ENCODE measurements at regions of chr7 and their contacts with region 1.

Region 1: DNA sequence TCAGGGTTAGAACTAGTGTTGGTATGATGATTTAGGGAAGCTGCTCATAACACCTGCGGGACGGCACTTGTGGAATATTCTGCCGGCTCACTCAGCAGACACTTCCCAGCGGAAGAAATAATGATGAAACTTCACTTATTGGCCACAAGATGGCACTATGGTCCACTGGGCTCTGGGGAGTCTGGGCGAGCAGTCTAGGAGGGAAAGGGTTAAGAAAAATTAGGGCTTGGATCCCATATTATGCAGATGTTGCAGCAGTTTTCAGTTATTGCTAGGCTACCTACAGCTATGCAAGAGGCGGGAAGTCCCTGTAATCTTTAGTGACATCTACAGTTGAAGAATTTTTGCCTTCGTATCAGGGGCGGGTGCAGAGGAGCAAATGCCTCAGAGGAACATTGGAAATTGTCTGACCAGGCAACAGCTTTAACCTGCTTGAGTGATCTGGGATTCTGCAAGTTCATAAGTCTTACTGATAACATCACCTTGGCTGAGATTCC is 238.7 kb upstream of the PRSS58 start:
- DNase-seq: no peak
- H3K4me3 ChIP-seq: no peak overlapping the region
- H3K27me3 ChIP-seq: peaks cover 16% of the 10 kb centered on the region
- CTCF ChIP-seq: peak; percentile 77

Region 2: GRCh38 chr7:142001163-142001874 is 495.3 kb before region 1 on chr7:
- CTCF ChIA-PET with region 1: no interaction called
- POLR2A ChIA-PET with region 1: no interaction called
- DNase-seq: no peak
- H3K4me3 ChIP-seq: no peak overlapping the region
- H3K27me3 ChIP-seq: no peaks in the 10 kb centered on the region
- CTCF ChIP-seq: no peak

Region 3: DNA sequence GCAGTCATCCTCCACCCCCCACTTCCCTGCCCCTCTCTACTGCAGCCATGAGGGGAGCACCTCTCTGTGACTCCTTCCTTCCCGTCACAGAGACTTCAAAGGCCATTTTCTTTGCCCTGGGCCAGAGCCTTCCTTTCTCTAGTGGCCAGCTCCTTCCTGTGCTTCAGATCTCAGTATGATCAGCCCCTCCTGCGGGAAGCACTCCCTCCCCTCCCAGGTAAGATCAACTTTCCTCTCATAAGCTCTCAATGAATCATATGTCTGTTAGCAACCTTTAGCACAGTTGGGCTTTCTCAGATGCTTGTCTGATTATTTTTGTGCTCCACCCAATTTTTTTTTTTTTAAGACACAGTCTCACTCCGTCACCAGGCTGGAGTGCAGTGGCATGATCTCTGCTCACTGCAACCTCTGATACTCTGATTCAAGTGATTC is 11.7 kb after region 1 on chr7:
- CTCF ChIA-PET with region 1: interaction called, 236 read pairs
- POLR2A ChIA-PET with region 1: no interaction called
- DNase-seq: no peak
- H3K4me3 ChIP-seq: no peak overlapping the region
- H3K27me3 ChIP-seq: peaks cover 18% of the 10 kb centered on the region
- CTCF ChIP-seq: no peak

Region 4: GRCh38 chr7:142516038-142516501 is 19.5 kb after region 1 on chr7:
- CTCF ChIA-PET with region 1: interaction called, 31 read pairs
- POLR2A ChIA-PET with region 1: no interaction called
- DNase-seq: no peak
- H3K4me3 ChIP-seq: no peak overlapping the region
- H3K27me3 ChIP-seq: peaks cover 2% of the 10 kb centered on the region
- CTCF ChIP-seq: peak; percentile 83

Region 5: DNA sequence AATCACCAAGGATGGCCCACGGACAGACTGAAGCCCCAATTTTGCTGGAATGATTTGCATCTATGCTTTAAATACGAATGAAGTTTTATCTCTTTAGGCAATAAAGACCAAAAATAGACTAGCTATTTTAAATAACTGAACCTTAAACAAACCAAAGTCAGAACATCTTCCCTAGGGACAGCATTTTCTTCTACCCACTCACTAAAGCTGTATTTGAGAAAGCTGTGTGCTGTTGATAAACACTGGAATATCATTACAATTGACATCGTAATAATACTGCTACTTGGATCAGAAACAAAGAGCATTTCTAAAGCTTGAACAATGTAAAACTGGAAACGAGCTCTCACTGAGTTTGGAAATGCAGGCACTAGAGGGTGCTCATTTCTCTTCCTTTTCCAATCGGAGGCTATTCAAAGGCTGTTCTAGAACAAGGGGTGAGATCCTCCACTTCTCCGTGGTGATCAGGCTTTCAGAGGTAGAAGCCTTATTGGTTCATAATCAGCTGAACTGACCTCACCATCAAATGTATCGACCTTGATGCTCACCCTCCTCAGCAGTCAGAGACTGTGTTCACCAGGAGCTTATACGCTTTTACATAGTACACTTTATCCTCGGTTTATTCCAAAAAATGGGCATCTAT is 27.3 kb after region 1 on chr7:
- CTCF ChIA-PET with region 1: interaction called, 31 read pairs
- POLR2A ChIA-PET with region 1: no interaction called
- DNase-seq: no peak
- H3K4me3 ChIP-seq: no peak overlapping the region
- H3K27me3 ChIP-seq: peaks cover 11% of the 10 kb centered on the region
- CTCF ChIP-seq: peak; percentile 28